ENCODE measurements at regions of chr4 and their contacts with region 1.

Region 1: DNA sequence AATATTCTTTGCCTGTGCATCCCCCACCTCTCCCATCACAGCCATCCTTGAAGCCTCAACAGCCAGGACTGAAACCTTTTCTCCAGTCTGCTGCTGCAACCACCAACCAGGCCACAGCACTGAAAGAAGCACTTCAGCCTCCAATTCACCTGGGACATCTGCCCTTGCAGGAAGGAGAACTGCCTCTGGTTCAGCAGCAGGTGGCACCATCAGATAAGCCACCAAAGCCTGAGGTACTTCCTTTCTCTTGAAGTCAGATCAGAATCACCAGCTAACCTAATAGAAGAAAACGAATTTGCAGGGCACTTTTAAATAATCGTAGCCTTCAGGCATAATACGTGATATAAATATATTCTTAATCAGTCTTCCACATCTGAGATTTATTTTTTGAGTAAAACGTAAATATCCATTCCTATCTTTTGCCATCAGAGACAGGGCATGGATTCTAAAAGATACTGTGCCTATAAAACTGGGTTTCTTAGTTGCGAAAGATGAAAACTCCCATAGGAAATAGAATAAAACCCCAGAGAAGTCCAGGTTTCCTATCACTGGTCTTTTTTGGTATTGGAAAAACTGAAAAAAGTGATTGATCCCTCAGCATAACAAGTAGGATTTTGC is 9.5 kb downstream of the AMBN start:
- DNase-seq: peak; percentile 56
- H3K4me3 ChIP-seq: no peak overlapping the region
- H3K27ac ChIP-seq: no peak overlapping the region
- H3K4me1 ChIP-seq: no peaks in the 10 kb centered on the region
- H3K27me3 ChIP-seq: peaks cover 3 to 6% of the 10 kb centered on the region in 2 experiments
- CTCF ChIP-seq: peak; percentile 66
- POLR2A ChIP-seq: no peak

Region 2: DNA sequence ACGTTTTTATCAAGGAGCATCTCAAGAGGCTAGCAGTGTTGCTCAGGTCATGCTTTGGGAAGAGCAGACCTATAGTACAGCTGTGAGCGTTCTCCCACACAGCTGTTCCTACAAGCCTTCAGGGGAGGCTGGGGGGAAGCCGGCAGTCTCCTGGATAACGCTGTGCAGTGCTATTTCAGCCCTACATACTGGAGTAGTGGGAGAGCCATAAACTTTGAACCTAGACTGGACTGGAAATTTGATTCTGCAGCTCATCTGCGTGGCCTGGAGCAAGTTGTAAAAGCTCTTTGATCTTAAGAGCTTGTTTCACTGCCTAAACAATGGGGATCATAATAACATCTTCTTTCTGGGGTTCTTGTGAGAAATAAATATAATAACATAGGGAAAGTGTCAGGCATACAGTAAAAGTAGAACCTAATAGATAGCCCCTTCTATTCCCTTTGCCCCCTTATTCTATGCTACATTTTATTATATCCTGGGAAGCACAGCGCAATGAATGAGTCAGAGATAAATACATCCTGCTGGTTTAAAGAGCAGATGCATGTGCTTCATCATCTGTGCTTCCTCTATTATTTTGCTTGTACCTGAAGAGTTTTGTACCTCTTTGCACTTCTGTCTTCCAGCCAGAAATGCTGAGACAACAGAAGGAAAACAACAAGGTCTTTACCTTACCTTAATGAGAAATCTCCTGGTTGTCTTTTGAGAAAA is 24.2 kb before region 1 on chr4:
- CTCF ChIA-PET with region 1: no interaction called
- POLR2A ChIA-PET with region 1: no interaction called
- dilution Hi-C with region 1: no loop called
- intact Hi-C with region 1: no loop called
- DNase-seq: no peak
- H3K4me3 ChIP-seq: no peak overlapping the region
- H3K27ac ChIP-seq: no peak overlapping the region
- H3K4me1 ChIP-seq: no peaks in the 10 kb centered on the region
- H3K27me3 ChIP-seq: peaks cover 0 to 6% of the 10 kb centered on the region in 2 experiments
- CTCF ChIP-seq: no peak
- POLR2A ChIP-seq: no peak

Region 3: GRCh38 chr4:70651864-70652506 is 50.5 kb after region 1 on chr4:
- CTCF ChIA-PET with region 1: interaction called, 4 read pairs
- POLR2A ChIA-PET with region 1: no interaction called
- dilution Hi-C with region 1: no loop called
- intact Hi-C with region 1: loop called (anchors 5 kb)
- DNase-seq: peak; percentile 55
- H3K4me3 ChIP-seq: no peak overlapping the region
- H3K27ac ChIP-seq: no peak overlapping the region
- H3K4me1 ChIP-seq: peaks cover 12% of the 10 kb centered on the region
- H3K27me3 ChIP-seq: peaks cover 0 to 8% of the 10 kb centered on the region in 2 experiments
- CTCF ChIP-seq: peak; percentile 23 to 29
- POLR2A ChIP-seq: no peak

Region 4: GRCh38 chr4:70704331-70705145 is 103.0 kb after region 1 on chr4:
- CTCF ChIA-PET with region 1: no interaction called
- POLR2A ChIA-PET with region 1: no interaction called
- dilution Hi-C with region 1: no loop called
- intact Hi-C with region 1: loop called (anchors 1 kb)
- DNase-seq: peak; percentile 81
- H3K4me3 ChIP-seq: peak overlapping the region; percentile 73 to 93 (median 89)
- H3K27ac ChIP-seq: peak overlapping the region; percentile 85
- H3K4me1 ChIP-seq: peaks cover 20% of the 10 kb centered on the region
- H3K27me3 ChIP-seq: no peaks in the 10 kb centered on the region
- CTCF ChIP-seq: peak in 1 of 2 donors; percentile 51
- POLR2A ChIP-seq: peak; percentile 27

Region 5: DNA sequence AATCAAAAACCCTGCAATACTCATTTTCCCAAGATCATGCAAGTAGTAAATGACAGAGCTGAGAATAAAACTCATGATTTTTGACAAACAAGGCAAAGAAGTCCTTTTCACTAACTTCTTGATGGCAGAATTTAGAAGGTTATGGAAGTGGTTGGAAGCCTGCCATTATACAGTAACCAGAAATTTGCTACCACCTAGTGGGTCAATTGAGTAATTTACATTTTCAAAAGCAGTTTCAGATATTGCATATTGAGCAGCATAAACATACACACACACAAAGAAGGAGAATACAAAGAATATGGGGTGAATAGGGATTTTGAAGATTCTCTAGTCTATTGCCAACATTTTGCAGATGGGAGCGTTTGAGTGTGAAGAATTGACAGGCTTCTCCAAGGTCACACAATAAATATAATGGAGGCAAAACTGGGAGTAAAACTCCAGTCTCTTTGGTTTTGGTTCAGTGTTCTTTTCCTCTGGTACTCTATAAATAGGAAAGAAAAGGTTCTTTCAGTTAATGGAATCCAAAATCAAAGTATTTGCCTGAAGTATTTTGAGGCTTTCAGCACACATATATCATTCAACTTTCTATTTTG is 1112.2 kb after region 1 on chr4:
- CTCF ChIA-PET with region 1: interaction called, 22 read pairs
- POLR2A ChIA-PET with region 1: no interaction called
- dilution Hi-C with region 1: no loop called
- intact Hi-C with region 1: loop called (anchors 1 kb)
- DNase-seq: peak; percentile 45
- H3K4me3 ChIP-seq: no peak overlapping the region
- H3K27ac ChIP-seq: no peak overlapping the region
- H3K4me1 ChIP-seq: no peaks in the 10 kb centered on the region
- H3K27me3 ChIP-seq: no peaks in the 10 kb centered on the region
- CTCF ChIP-seq: peak; percentile 30 to 36
- POLR2A ChIP-seq: no peak

Region 6: GRCh38 chr4:72302981-72303704 is 1701.6 kb after region 1 on chr4:
- CTCF ChIA-PET with region 1: interaction called, 10 read pairs
- POLR2A ChIA-PET with region 1: no interaction called
- dilution Hi-C with region 1: no loop called
- intact Hi-C with region 1: loop called (anchors 1 kb)
- DNase-seq: peak; percentile 49
- H3K4me3 ChIP-seq: no peak overlapping the region
- H3K27ac ChIP-seq: no peak overlapping the region
- H3K4me1 ChIP-seq: no peaks in the 10 kb centered on the region
- H3K27me3 ChIP-seq: no peaks in the 10 kb centered on the region
- CTCF ChIP-seq: peak; percentile 64 to 68
- POLR2A ChIP-seq: no peak